Left ventricle myocardium inferior (tissue), 1 donor: ENCODE measurements at regions of chr16 and their contacts with region 1.

Region 1: GRCh38 chr16:57300387-57301125 is 16.1 kb upstream of the PLLP start:
- DNase-seq: peak; percentile 98
- H3K4me3 ChIP-seq: peak overlapping the region; percentile 65
- H3K27ac ChIP-seq: peak overlapping the region; percentile 95
- H3K4me1 ChIP-seq: peaks cover 42% of the 10 kb centered on the region
- H3K27me3 ChIP-seq: no peaks in the 10 kb centered on the region
- CTCF ChIP-seq: peak; percentile 98

Region 2: GRCh38 chr16:57244767-57245471 is 55.6 kb before region 1 on chr16 and contains the start of gene ARL2BP:
- intact Hi-C with region 1: loop called (anchors 5 kb)
- DNase-seq: peak; percentile 99
- H3K4me3 ChIP-seq: peak within 1 kb of the TSS; percentile 95
- H3K27ac ChIP-seq: peak within 1 kb of the TSS; percentile 98
- H3K4me1 ChIP-seq: peaks cover 29% of the 10 kb centered on the region
- H3K27me3 ChIP-seq: no peaks in the 10 kb centered on the region
- CTCF ChIP-seq: no peak
- total RNA-seq, gene ARL2BP: 57.8 TPM

Region 3: DNA sequence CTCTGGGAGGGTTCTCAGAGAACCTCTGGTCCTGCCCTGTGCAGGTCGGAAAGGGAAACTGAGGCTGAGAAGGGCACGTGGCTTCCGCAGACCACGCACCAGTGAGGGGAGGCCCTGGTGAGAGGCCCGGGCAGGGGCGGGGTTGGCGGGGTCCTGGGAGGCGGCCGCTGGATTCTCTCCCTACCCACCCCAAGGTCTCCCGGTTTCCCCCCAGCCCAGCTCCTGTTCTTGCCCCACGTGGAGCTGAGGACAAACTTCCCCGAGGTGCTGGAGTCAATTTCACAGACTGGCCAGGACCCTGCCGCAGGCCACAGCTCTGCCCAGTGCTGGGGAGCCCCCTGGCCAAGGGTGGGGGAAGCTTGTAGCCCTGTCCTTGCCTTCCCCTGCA is 115.6 kb after region 1 on chr16:
- intact Hi-C with region 1: loop called (anchors 2 kb)
- DNase-seq: no peak
- H3K4me3 ChIP-seq: no peak overlapping the region
- H3K27ac ChIP-seq: peak overlapping the region; percentile 52
- H3K4me1 ChIP-seq: peaks cover 37% of the 10 kb centered on the region
- H3K27me3 ChIP-seq: no peaks in the 10 kb centered on the region
- CTCF ChIP-seq: no peak